ENCODE measurements at regions of chr7 and their contacts with region 1.

Region 1: DNA sequence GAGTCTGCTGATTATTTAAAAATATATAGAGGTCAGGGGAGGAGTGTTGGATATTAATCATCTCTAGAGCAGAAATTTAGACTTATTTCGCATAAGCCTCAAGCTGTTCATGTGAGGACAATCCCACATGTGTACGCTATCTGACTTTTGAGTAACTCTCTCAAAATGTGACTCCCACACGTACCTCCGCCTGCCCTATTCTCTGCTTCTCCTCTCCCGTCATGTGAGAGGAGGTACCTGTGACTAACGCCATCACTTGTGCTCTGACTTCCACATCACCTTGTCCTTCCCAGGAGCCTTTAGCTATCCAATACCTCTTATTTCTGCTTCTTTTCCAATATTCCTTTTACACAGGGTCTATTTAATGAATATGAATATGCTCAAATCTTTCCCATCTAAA is 119.3 kb upstream of the CALCR start:
- DNase-seq: no peak
- ATAC-seq: no peak
- H3K4me3 ChIP-seq: no peak overlapping the region
- H3K4me3 Mint-ChIP-seq: no peak overlapping the region
- H3K27ac ChIP-seq: no peak overlapping the region
- H3K27ac Mint-ChIP-seq: no peak overlapping the region
- H3K4me1 ChIP-seq: no peaks in the 10 kb centered on the region
- H3K4me1 Mint-ChIP-seq: no peaks in the 10 kb centered on the region
- H3K27me3 ChIP-seq: no peaks in the 10 kb centered on the region
- H3K27me3 Mint-ChIP-seq: no peaks in the 10 kb centered on the region
- CTCF ChIP-seq: no peak

Region 2: DNA sequence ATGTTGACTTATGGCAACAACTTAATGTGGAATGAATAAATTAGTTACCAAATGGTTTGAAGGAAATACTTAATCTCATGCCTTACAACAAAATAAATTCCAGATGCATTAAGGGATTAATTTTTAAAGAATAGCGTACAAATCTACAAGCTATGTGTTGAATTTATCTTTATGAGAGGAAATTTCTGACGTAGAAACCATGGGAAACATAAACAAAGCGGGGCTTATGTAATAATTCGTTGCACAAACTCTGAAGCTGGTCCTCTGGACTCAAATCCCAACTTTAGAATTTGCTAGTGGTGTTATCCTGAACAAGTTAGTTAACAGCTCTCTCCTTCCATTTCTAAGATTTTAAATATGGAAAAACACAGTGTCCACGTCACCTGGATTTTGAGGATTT is 18.1 kb after region 1 on chr7:
- CTCF ChIA-PET with region 1: no interaction called
- POLR2A ChIA-PET with region 1: no interaction called
- intact Hi-C with region 1: loop called in 1 of 2 experiments (anchors 2 kb)
- DNase-seq: no peak
- ATAC-seq: no peak
- H3K4me3 ChIP-seq: no peak overlapping the region
- H3K4me3 Mint-ChIP-seq: no peak overlapping the region
- H3K27ac ChIP-seq: no peak overlapping the region
- H3K27ac Mint-ChIP-seq: no peak overlapping the region
- H3K4me1 ChIP-seq: no peaks in the 10 kb centered on the region
- H3K4me1 Mint-ChIP-seq: no peaks in the 10 kb centered on the region
- H3K27me3 ChIP-seq: no peaks in the 10 kb centered on the region
- H3K27me3 Mint-ChIP-seq: peaks cover 3% of the 10 kb centered on the region
- CTCF ChIP-seq: no peak

Measured in CD8-positive, alpha-beta T cell (primary cell).